MCF 10A (cell line): ENCODE measurements at regions of chr2 and their contacts with region 1.

Region 1: DNA sequence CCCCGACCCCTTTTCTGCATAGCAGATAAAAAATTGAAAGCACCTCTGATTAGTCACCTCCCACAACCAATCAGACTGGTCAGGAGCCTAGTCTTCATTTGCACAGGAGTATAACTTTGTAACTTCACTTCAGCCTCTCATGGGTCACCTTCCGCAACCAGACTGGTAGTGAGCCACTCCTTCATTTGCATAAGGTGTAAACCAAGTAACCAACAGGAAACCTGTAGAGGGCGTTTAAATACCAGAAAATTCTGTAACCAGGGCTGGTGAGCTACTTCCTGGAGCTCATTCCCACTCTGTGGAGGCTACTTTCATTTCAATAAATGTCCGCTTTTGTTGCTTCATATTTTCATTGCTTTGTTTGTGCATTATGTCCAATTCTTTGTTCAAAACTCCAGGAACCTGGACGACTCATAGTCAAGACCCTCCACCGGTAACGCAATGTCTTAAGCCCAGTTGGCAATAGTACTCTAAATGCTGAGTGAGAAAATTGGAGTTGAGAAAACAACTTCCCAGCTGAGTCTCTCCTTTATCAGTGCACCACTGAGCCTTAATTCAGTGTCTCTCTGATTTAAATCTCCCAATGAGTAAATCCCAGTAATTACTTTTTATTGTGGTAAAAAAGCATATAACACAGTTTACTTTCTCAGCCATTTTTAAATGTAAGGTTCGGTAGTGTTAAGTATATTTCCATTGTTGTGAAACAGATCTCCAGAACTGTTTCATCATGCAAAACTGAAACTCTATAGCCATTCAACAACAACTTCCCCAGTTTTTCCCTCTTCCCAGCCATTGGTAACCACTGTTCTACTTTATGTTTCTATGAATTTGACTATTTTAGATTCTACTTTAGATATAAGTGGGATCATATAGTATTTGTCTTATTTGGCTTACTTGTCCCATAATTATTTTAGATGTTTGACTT is 392.7 kb upstream of the SLC8A1 start:
- DNase-seq: peak; percentile 60
- H3K4me3 Mint-ChIP-seq: no peak overlapping the region
- H3K27ac Mint-ChIP-seq: no peak overlapping the region
- H3K4me1 Mint-ChIP-seq: no peaks in the 10 kb centered on the region
- H3K27me3 Mint-ChIP-seq: no peaks in the 10 kb centered on the region
- CTCF ChIP-seq: peak; percentile 22

Region 2: GRCh38 chr2:41400088-41400665 is 555.6 kb after region 1 on chr2:
- CTCF ChIA-PET with region 1: interaction called, 3 read pairs
- POLR2A ChIA-PET with region 1: no interaction called
- intact Hi-C with region 1: loop called (anchors 10 kb)
- DNase-seq: peak; percentile 39
- H3K4me3 Mint-ChIP-seq: no peak overlapping the region
- H3K27ac Mint-ChIP-seq: no peak overlapping the region
- H3K4me1 Mint-ChIP-seq: no peaks in the 10 kb centered on the region
- H3K27me3 Mint-ChIP-seq: peaks cover 33% of the 10 kb centered on the region
- CTCF ChIP-seq: peak; percentile 5